GM18951 (cell line): ENCODE measurements at regions of chr1 and their contacts with region 1.

Region 1: GRCh38 chr1:117059678-117060440 is at the start of gene TTF2:
- POLR2A ChIP-seq: peak; percentile 69

Region 2: GRCh38 chr1:116570358-116571200 is 489.3 kb before region 1 on chr1 and contains the start of gene CD58:
- in situ Hi-C with region 1: loop called (anchors 10 kb)
- POLR2A ChIP-seq: peak; percentile 93

Region 3: GRCh38 chr1:116737020-116737854 is 322.6 kb before region 1 on chr1:
- in situ Hi-C with region 1: loop called (anchors 10 kb)
- POLR2A ChIP-seq: peak; percentile 33